Mammary epithelial cell (primary cell): ENCODE measurements at regions of chr1 and their contacts with region 1.

Region 1: DNA sequence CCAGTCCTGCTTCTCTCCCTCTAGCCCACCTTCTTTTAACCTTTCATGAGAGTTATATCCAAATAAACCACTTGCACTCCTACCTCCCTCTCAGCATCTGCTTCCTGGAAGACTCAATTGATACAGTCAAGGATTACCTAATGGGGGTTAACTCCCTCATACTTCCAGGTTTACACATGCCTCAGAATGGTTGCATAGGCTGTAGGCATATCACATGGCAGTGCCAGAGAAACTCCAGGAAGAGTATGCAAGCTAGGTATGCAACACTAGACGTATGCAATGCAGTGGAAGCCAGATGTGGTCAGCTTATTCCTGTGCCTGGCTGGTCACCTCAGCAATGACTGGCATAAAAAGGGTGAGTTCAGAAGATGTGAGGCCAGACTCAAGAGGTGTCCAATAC is 32.7 kb upstream of the VANGL1 start:
- DNase-seq: peak; percentile 52
- H3K4me3 ChIP-seq: no peak overlapping the region
- H3K27ac ChIP-seq: no peak overlapping the region
- H3K4me1 ChIP-seq: peaks cover 14% of the 10 kb centered on the region
- H3K27me3 ChIP-seq: no peaks in the 10 kb centered on the region
- CTCF ChIP-seq: no peak

Region 2: GRCh38 chr1:115706587-115707425 is 97.8 kb after region 1 on chr1:
- CTCF ChIA-PET with region 1: interaction called, 8 read pairs
- dilution Hi-C with region 1: loop called (anchors 5 kb)
- in situ Hi-C with region 1: no loop called
- intact Hi-C with region 1: loop called (anchors 1 kb)
- DNase-seq: peak; percentile 30
- H3K4me3 ChIP-seq: no peak overlapping the region
- H3K27ac ChIP-seq: no peak overlapping the region
- H3K4me1 ChIP-seq: peaks cover 5% of the 10 kb centered on the region
- H3K27me3 ChIP-seq: no peaks in the 10 kb centered on the region
- CTCF ChIP-seq: peak; percentile 42 to 70

Region 3: DNA sequence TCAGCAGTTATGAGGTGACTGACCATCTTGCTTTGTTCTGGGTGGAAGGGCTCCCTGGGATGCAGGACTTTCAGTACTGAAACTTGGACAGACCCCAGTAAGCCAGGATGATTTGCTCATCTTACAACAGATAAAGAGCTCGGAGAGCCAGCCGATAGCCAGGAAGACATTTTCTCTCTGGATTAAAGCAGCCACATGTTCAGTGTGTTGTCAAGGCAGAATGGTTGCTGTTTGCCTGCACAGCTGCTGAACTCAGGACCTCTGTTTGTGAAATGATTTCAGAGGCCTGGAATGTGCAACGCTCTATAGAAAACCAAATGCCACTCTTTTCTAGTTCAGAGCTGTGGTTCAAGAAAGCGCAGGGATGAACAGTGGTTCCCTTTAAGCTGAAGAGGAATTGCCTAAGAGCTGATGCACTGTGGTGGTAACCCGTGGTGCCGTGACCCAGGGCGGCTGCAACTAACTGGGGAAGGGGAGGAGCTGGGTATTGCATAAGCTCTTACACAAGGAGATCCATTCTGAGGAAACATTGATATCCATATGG is 118.8 kb after region 1 on chr1:
- CTCF ChIA-PET with region 1: interaction called, 12 read pairs
- dilution Hi-C with region 1: no loop called
- in situ Hi-C with region 1: no loop called
- intact Hi-C with region 1: no loop called
- DNase-seq: peak; percentile 94
- H3K4me3 ChIP-seq: no peak overlapping the region
- H3K27ac ChIP-seq: no peak overlapping the region
- H3K4me1 ChIP-seq: no peaks in the 10 kb centered on the region
- H3K27me3 ChIP-seq: no peaks in the 10 kb centered on the region
- CTCF ChIP-seq: no peak

Region 4: GRCh38 chr1:115764541-115764940 is 155.5 kb after region 1 on chr1:
- CTCF ChIA-PET with region 1: interaction called, 17 read pairs
- dilution Hi-C with region 1: no loop called
- in situ Hi-C with region 1: loop called in 1 of 2 experiments (anchors 10 kb)
- intact Hi-C with region 1: loop called (anchors 1 kb)
- DNase-seq: peak; percentile 42
- H3K4me3 ChIP-seq: no peak overlapping the region
- H3K27ac ChIP-seq: no peak overlapping the region
- H3K4me1 ChIP-seq: no peaks in the 10 kb centered on the region
- H3K27me3 ChIP-seq: no peaks in the 10 kb centered on the region
- CTCF ChIP-seq: peak; percentile 67 to 69

Region 5: DNA sequence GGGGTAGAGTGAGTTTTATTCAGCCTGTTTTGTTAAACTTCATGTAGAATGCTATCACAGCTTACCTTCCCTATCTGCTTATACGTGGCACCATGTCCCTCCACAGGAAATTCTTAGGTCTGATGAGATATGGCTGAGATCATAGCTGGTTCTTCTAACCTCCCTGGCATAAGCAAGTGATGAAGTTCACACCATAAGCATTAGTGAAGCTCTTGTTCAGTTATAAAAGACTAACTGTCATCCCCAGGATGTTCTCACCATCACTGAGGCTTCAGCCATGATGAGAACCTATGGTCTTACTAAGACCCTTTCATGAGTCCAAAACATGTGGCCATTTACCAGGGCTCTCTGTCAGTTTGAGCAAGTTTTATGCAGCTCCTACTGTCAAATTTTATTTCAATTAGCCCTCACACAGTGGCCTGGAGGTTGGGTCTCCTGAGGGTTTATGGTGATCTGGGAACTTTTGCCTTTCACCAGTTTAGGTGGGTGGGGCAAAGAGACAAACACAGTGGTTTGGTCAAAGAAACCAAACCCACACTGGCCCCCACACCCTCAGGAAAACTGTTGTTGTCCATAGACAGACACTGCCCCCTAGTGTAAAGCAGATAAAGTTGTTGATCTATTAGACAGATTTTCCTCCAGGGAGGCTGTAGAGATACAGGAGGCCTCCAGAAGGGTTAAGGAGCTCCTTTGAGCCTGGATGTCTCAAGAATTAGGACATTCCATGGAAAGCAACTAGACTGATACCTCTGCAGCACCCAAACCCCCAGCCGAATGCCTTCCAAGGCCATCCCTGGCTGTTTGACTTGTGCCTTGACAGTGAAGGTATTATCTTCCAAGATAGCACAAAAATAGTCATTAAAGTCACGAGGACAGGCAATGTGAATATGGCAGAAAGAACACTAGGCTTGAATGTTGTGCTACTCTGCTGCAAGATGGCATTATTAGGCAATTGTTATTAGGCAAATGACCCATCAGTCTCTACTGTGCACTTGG is 372.3 kb after region 1 on chr1:
- CTCF ChIA-PET with region 1: no interaction called
- dilution Hi-C with region 1: no loop called
- in situ Hi-C with region 1: loop called in 1 of 2 experiments (anchors 25 kb)
- intact Hi-C with region 1: loop called (anchors 2 kb)
- DNase-seq: peak; percentile 51
- H3K4me3 ChIP-seq: no peak overlapping the region
- H3K27ac ChIP-seq: peak overlapping the region; percentile 9
- H3K4me1 ChIP-seq: peaks cover 29% of the 10 kb centered on the region
- H3K27me3 ChIP-seq: no peaks in the 10 kb centered on the region
- CTCF ChIP-seq: peak; percentile 54 to 69